GM12878 (cell line): ENCODE measurements at regions of chr19 and their contacts with region 1.

Region 1: GRCh38 chr19:37172368-37173366 is at the start of gene ZNF585A:
- DNase-seq: peak; percentile 92
- ATAC-seq: peak; percentile 100
- H3K4me3 ChIP-seq: peak within 1 kb of the TSS; percentile 89
- H3K27ac ChIP-seq: peak within 1 kb of the TSS; percentile 82
- H3K4me1 ChIP-seq: no peaks in the 10 kb centered on the region
- H3K27me3 ChIP-seq: no peaks in the 10 kb centered on the region
- CTCF ChIP-seq: peak in 2 of 3 experiments; percentile 14 to 16; a peak in 2 of 6 replicates
- EP300 ChIP-seq: no peak
- POLR2A ChIP-seq: peak; percentile 62
- RAD21 ChIP-seq: no peak
- polyA plus RNA-seq, gene ZNF585A: 36.4 to 38.7 TPM

Region 2: GRCh38 chr19:37077934-37078725 is 94.5 kb before region 1 on chr19 and contains the start of gene ZNF420:
- CTCF ChIA-PET with region 1: no interaction called
- POLR2A ChIA-PET with region 1: no interaction called
- RAD21 ChIA-PET with region 1: no interaction called
- SMC1A ChIA-PET with region 1: interaction called, 3 read pairs
- in situ Hi-C with region 1: no loop called
- intact Hi-C with region 1: loop called (anchors 5 kb)
- DNase-seq: peak; percentile 82
- ATAC-seq: peak; percentile 99
- H3K4me3 ChIP-seq: peak within 1 kb of the TSS; percentile 88
- H3K27ac ChIP-seq: peak within 1 kb of the TSS; percentile 83
- H3K4me1 ChIP-seq: peaks cover 6% of the 10 kb centered on the region
- H3K27me3 ChIP-seq: no peaks in the 10 kb centered on the region
- CTCF ChIP-seq: no peak
- EP300 ChIP-seq: no peak
- POLR2A ChIP-seq: peak; percentile 89
- RAD21 ChIP-seq: no peak
- polyA plus RNA-seq, gene ZNF420: 6.4 to 7.8 TPM

Region 3: GRCh38 chr19:37127999-37128820 is 44.5 kb before region 1 on chr19:
- CTCF ChIA-PET with region 1: no interaction called
- POLR2A ChIA-PET with region 1: no interaction called
- RAD21 ChIA-PET with region 1: no interaction called
- SMC1A ChIA-PET with region 1: no interaction called
- in situ Hi-C with region 1: no loop called
- intact Hi-C with region 1: no loop called
- DNase-seq: no peak
- ATAC-seq: no peak
- H3K4me3 ChIP-seq: no peak overlapping the region
- H3K27ac ChIP-seq: no peak overlapping the region
- H3K4me1 ChIP-seq: no peaks in the 10 kb centered on the region
- H3K27me3 ChIP-seq: no peaks in the 10 kb centered on the region
- CTCF ChIP-seq: no peak
- EP300 ChIP-seq: no peak
- POLR2A ChIP-seq: no peak
- RAD21 ChIP-seq: no peak

Region 4: GRCh38 chr19:37160153-37160552 is 12.5 kb before region 1 on chr19:
- CTCF ChIA-PET with region 1: no interaction called
- POLR2A ChIA-PET with region 1: no interaction called
- RAD21 ChIA-PET with region 1: no interaction called
- SMC1A ChIA-PET with region 1: no interaction called
- in situ Hi-C with region 1: no loop called
- intact Hi-C with region 1: no loop called
- DNase-seq: no peak
- ATAC-seq: no peak
- H3K4me3 ChIP-seq: no peak overlapping the region
- H3K27ac ChIP-seq: no peak overlapping the region
- H3K4me1 ChIP-seq: no peaks in the 10 kb centered on the region
- H3K27me3 ChIP-seq: no peaks in the 10 kb centered on the region
- CTCF ChIP-seq: no peak
- EP300 ChIP-seq: no peak
- POLR2A ChIP-seq: no peak
- RAD21 ChIP-seq: no peak